Esophagus squamous epithelium (tissue), 5 donors: ENCODE measurements at regions of chr1 and their contacts with region 1.

Region 1: GRCh38 chr1:28668191-28668955 is at the start of gene GMEB1:
- DNase-seq: peak; percentile 28
- H3K4me3 ChIP-seq: peak within 1 kb of the TSS; percentile 82 to 98 (median 96)
- H3K27ac ChIP-seq: peak within 1 kb of the TSS; percentile 96 to 100 (median 98)
- H3K4me1 ChIP-seq: peaks cover 4 to 30% (median 10%) of the 10 kb centered on the region in 3 donors
- H3K27me3 ChIP-seq: no peaks in the 10 kb centered on the region
- CTCF ChIP-seq: peak in 1 of 6 experiments; percentile 10
- POLR2A ChIP-seq: no peak
- total RNA-seq, gene GMEB1: 4.0 to 12.8 (median 9.0) TPM

Region 2: DNA sequence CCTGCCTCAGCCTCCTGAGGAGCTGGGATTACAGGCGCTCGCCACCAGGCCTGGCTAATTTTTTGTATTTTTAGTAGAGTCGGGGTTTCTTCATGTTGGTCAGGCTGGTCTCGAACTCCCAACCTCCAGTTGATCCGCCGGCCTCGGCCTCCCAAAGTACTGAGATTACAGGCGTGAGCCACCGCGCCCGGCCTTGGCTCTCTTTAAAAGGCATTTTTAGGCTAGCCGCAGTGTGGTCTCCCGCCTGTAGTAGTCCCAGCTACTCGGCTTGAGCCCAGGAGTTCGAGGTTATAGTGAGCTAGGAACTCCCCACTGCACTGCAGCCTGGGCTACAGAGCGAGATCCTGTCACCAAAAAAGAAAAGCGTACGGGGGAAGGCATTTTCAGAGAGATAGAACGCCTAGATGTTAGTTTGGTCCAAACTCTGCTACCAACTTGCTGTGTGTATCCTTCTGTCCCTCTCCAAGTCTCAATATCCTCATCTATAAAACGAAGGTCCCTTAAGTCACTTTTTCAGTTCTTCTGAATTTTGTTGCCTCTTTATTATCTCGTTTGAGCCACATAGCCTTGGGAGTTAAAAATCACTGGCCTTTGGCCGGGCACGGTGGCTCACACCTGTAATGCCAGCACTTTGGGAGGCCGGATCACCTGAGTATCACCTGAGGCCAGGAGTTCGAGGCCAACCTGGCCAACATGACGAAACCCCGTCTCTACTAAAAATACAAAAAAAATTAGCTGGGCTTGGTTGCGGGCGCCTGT is 338.8 kb before region 1 on chr1:
- intact Hi-C with region 1: no loop called
- DNase-seq: no peak
- H3K4me3 ChIP-seq: peak overlapping the region; percentile 57 to 68 (median 63)
- H3K27ac ChIP-seq: peak overlapping the region; percentile 85 to 92 (median 86)
- H3K4me1 ChIP-seq: peaks cover 12 to 41% (median 13%) of the 10 kb centered on the region in 3 donors
- H3K27me3 ChIP-seq: no peaks in the 10 kb centered on the region
- CTCF ChIP-seq: peak in 1 of 6 experiments; percentile 34
- POLR2A ChIP-seq: no peak

Region 3: DNA sequence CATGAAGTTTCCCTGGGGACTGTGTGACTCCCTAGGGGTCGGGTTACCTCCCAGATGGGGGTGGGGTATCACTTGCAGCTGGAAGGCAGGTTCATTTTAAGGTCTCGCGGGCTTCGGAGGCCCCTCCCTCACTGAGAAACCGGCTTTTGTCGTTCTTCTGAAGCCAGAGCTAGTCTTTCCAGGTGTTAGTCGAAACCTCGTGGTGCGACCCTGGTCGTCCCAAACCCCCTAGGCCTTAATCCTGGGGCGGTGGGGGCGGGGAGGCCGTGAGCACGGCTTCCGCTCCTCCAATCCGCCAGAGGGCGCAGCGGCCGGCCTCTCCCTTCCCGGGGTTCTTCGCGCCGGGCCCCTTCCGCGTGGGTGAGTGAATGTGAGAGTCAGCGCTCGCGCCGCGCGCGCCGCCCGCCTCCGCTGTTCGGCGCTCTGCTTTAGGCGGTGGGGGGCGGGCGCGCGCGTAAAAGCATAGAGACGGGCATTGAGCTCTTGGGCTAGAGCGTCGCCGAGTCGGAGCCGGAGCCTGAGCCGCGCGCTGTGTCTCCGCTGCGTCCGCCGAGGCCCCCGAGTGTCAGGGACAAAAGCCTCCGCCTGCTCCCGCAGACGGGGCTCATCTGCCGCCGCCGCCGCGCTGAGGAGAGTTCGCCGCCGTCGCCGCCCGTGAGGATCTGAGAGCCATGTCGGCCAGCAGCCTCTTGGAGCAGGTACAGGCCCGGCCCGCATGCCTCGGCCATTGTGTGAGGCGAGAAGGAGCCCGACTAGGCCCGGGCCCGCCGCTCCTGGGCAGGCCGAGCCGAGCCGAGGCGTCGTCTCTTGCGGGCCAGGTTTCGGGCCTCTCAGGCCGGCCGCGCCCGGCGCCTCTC is 68.3 kb after region 1 on chr1 and contains the start of gene YTHDF2:
- intact Hi-C with region 1: loop called (anchors 10 kb)
- DNase-seq: peak; percentile 90
- H3K4me3 ChIP-seq: peak within 1 kb of the TSS; percentile 69 to 92 (median 74)
- H3K27ac ChIP-seq: peak within 1 kb of the TSS; percentile 92 to 99 (median 95)
- H3K4me1 ChIP-seq: peaks cover 28 to 49% (median 30%) of the 10 kb centered on the region in 3 donors
- H3K27me3 ChIP-seq: no peaks in the 10 kb centered on the region
- CTCF ChIP-seq: peak; percentile 88 to 98 (median 94)
- POLR2A ChIP-seq: peak in 3 of 4 donors; percentile 51 to 96 (median 95)
- total RNA-seq, gene YTHDF2: 55.0 to 66.2 (median 60.7) TPM